ENCODE measurements at regions of chr3 and their contacts with region 1.

Region 1: GRCh38 chr3:119498186-119498987 is at the start of gene TIMMDC1:
- DNase-seq: peak; percentile 98
- H3K4me3 ChIP-seq: peak within 1 kb of the TSS; percentile 75
- H3K27ac ChIP-seq: peak within 1 kb of the TSS; percentile 66
- H3K4me1 ChIP-seq: peaks cover 29% of the 10 kb centered on the region
- CTCF ChIP-seq: no peak
- total RNA-seq, gene TIMMDC1: 54.6 and 61.0 TPM in 2 replicates

Region 2: GRCh38 chr3:119359476-119360326 is 138.7 kb before region 1 on chr3:
- CTCF ChIA-PET with region 1: no interaction called
- POLR2A ChIA-PET with region 1: no interaction called
- intact Hi-C with region 1: no loop called
- DNase-seq: peak; percentile 47
- H3K4me3 ChIP-seq: no peak overlapping the region
- H3K27ac ChIP-seq: no peak overlapping the region
- H3K4me1 ChIP-seq: peaks cover 16% of the 10 kb centered on the region
- CTCF ChIP-seq: no peak

Region 3: DNA sequence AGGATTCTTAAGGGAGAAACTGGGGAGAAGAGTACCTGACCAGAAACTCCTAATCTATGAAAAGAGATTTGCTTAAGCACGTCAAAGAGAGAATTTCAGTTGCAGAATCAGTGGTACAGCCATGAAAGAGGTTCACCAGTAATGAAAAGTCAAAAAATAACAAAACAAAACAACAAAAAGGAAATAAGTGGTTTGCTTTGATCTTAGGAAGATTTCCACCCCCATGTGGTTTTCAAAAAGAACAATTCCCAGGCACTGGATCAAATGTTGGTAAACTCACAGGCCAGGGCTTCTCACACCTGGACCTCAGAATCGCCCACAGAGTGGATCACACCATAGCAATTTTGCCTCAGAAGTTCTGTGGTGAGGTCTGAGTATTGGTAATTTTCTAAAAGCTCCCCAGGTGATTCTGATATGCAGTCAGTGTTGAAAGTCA is 102.4 kb before region 1 on chr3:
- CTCF ChIA-PET with region 1: no interaction called
- POLR2A ChIA-PET with region 1: interaction called, 11 read pairs
- intact Hi-C with region 1: no loop called
- DNase-seq: no peak
- H3K4me3 ChIP-seq: no peak overlapping the region
- H3K27ac ChIP-seq: no peak overlapping the region
- H3K4me1 ChIP-seq: peaks cover 20% of the 10 kb centered on the region
- CTCF ChIP-seq: no peak

Region 4: GRCh38 chr3:119463171-119464169 is 34.9 kb before region 1 on chr3 and contains the start of gene TMEM39A:
- CTCF ChIA-PET with region 1: no interaction called
- POLR2A ChIA-PET with region 1: interaction called, 67 read pairs
- intact Hi-C with region 1: loop called (anchors 2 kb)
- DNase-seq: peak; percentile 99
- H3K4me3 ChIP-seq: peak within 1 kb of the TSS; percentile 91
- H3K27ac ChIP-seq: peak within 1 kb of the TSS; percentile 66
- H3K4me1 ChIP-seq: peaks cover 23% of the 10 kb centered on the region
- CTCF ChIP-seq: no peak
- total RNA-seq, gene TMEM39A: 31.6 and 35.3 TPM in 2 replicates

Region 5: DNA sequence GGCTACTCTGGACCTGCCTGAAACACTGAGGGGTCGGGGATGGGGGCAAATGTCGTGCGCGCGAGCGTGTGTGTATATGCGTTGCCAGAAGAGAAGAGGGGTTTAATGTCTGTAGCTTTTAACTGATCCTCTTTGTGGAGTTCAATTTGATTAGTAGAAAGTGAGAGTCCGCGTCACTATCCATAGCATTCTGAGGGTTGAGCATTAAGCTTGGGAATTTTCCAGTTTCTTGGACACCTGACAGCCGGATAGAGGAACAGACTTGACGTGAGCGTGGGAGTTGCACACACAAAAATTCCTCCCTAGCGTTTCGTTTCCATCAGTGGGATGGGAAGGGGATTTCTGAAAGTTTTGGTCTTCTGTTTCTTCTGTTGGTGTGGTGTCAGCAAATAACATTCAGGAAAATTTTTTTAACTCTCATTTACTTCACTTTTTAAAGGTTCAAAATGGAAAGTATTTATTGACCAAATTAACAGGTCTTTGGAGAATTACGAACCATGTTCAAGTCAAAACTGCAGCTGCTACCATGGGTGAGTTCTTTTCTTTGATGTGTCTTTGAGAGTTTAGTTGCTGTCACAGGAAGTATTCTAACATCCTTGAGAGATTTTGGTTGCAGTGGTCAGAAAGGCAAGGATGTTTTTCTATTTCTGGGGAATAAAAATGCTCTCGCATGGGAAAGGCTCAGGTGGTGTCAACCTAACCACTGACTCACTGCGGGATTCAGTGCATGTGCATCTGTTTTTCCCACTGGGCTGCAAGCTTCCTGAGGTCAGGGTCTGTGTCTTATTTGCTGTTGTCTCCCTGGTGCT is 28.8 kb before region 1 on chr3:
- CTCF ChIA-PET with region 1: no interaction called
- POLR2A ChIA-PET with region 1: interaction called, 67 read pairs
- intact Hi-C with region 1: loop called (anchors 2 kb)
- DNase-seq: peak; percentile 50
- H3K4me3 ChIP-seq: peak overlapping the region; percentile 82
- H3K27ac ChIP-seq: peak overlapping the region; percentile 47
- H3K4me1 ChIP-seq: peaks cover 19% of the 10 kb centered on the region
- CTCF ChIP-seq: no peak; the same call in 1 of the 2 replicates

Region 6: GRCh38 chr3:119559441-119559963 is 61.1 kb after region 1 on chr3 and contains the start of gene CD80:
- CTCF ChIA-PET with region 1: no interaction called
- POLR2A ChIA-PET with region 1: no interaction called
- intact Hi-C with region 1: loop called (anchors 2 kb)
- DNase-seq: peak; percentile 70
- H3K4me3 ChIP-seq: no peak within 1 kb of the TSS
- H3K27ac ChIP-seq: no peak within 1 kb of the TSS
- H3K4me1 ChIP-seq: peaks cover 3% of the 10 kb centered on the region
- CTCF ChIP-seq: peak; percentile 71
- total RNA-seq, gene CD80: not detected in 2 replicates

Measured in OCI-LY7 (cell line).